IMR-90 (cell line): ENCODE measurements at regions of chr11 and their contacts with region 1.

Region 1: DNA sequence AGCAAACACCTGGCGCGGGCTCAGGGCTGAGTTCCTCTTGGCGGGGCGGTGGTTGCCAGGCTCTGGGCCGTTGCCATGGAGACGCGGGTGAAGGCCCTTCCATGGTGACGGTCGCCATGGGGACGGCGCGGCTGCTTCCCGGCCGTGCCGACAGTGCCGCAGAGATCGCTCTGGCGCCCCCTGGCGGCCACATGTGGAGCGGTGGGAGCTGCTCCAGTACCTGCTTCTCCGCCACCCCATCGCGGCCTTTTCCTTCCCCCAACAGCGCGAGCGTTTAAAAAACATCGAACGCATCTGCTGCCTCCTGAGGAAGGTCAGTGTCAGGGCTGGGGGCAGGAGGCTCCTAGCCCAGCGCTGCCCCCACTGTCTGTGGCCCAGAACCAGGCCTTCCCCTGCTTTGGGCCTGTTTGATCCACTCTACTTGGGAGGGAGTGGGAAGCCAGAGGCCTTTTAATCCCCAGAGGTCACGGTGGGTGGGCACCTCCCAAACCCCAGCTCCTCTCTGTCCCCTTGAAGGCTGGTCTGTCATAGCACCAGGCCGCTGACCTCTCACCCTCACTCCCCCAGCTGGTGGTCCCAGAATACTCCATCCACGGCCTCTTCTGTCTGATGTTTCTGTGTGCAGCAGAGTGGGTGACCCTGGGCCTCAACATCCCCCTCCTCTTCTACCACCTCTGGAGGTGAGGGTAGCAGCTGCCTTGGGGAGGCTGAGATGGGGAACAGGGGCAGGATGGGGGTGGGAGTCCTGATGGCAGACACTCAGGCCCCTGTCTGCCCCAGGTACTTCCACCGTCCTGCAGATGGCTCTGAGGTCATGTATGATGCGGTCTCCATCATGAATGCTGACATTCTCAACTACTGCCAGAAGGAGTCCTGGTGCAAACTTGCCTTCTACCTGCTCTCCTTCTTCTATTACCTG is 4.8 kb downstream of the CNIH2 start:
- DNase-seq: peak; percentile 91
- ATAC-seq: peak; percentile 80
- H3K4me3 ChIP-seq: no peak overlapping the region
- H3K27ac ChIP-seq: no peak overlapping the region
- H3K4me1 ChIP-seq: peaks cover 7% of the 10 kb centered on the region
- H3K27me3 ChIP-seq: no peaks in the 10 kb centered on the region; the same call in 1 of the 2 replicates
- CTCF ChIP-seq: peak; percentile 96
- POLR2A ChIP-seq: 0 out of 2 replicates have a peak, but pooled peaks have one; percentile 42
- RAD21 ChIP-seq: peak; percentile 61

Region 2: GRCh38 chr11:66336234-66337102 is 53.7 kb after region 1 on chr11 and contains the start of gene RIN1:
- CTCF ChIA-PET with region 1: interaction called, 3 read pairs
- POLR2A ChIA-PET with region 1: no interaction called
- dilution Hi-C with region 1: no loop called
- in situ Hi-C with region 1: no loop called
- intact Hi-C with region 1: loop called (anchors 1 kb)
- DNase-seq: peak; percentile 99
- ATAC-seq: peak; percentile 86
- H3K4me3 ChIP-seq: peak within 1 kb of the TSS; percentile 60
- H3K27ac ChIP-seq: peak within 1 kb of the TSS; percentile 89
- H3K4me1 ChIP-seq: peaks cover 23% of the 10 kb centered on the region
- H3K27me3 ChIP-seq: no peaks in the 10 kb centered on the region
- CTCF ChIP-seq: peak; percentile 47
- POLR2A ChIP-seq: peak; percentile 97
- RAD21 ChIP-seq: peak; percentile 29; the same call in 1 of the 2 replicates
- total RNA-seq, gene RIN1: 9.9 and 10.6 TPM in 2 replicates